ENCODE measurements at regions of chr3 and their contacts with region 1.

Region 1: GRCh38 chr3:108818404-108818803 is 4.2 kb upstream of the TRAT1 start:
- DNase-seq: peak in 8 of 9 donors; percentile 43 to 82 (median 71)
- ATAC-seq: peak; percentile 95
- H3K4me3 ChIP-seq: no peak overlapping the region
- H3K4me3 Mint-ChIP-seq: peak overlapping the region in 8 of 10 donors; percentile 17 to 75 (median 55)
- H3K27ac ChIP-seq: no peak overlapping the region
- H3K27ac Mint-ChIP-seq: peak overlapping the region; percentile 2 to 100 (median 80)
- H3K4me1 ChIP-seq: peaks cover 26 to 29% of the 10 kb centered on the region in 2 donors
- H3K4me1 Mint-ChIP-seq: peaks cover 14 to 44% (median 31%) of the 10 kb centered on the region in 7 donors
- H3K27me3 ChIP-seq: no peaks in the 10 kb centered on the region
- H3K27me3 Mint-ChIP-seq: no peaks in the 10 kb centered on the region

Region 2: GRCh38 chr3:108221911-108222852 is 596.2 kb before region 1 on chr3 and contains the start of gene IFT57:
- CTCF ChIA-PET with region 1: no interaction called
- POLR2A ChIA-PET with region 1: no interaction called
- intact Hi-C with region 1: loop called (anchors 5 kb)
- DNase-seq: peak; percentile 89 to 97 (median 96)
- ATAC-seq: peak; percentile 97
- H3K4me3 ChIP-seq: peak within 1 kb of the TSS; percentile 59
- H3K4me3 Mint-ChIP-seq: peak within 1 kb of the TSS; percentile 93 to 99 (median 97)
- H3K27ac ChIP-seq: peak within 1 kb of the TSS; percentile 95
- H3K27ac Mint-ChIP-seq: peak within 1 kb of the TSS; percentile 95 to 100 (median 99)
- H3K4me1 ChIP-seq: peaks cover 21 to 24% of the 10 kb centered on the region in 2 donors
- H3K4me1 Mint-ChIP-seq: peaks cover 27 to 83% (median 62%) of the 10 kb centered on the region in 7 donors
- H3K27me3 ChIP-seq: no peaks in the 10 kb centered on the region
- H3K27me3 Mint-ChIP-seq: no peaks in the 10 kb centered on the region
- total RNA-seq, gene IFT57: 18.0 to 45.4 (median 26.4) TPM

Region 3: DNA sequence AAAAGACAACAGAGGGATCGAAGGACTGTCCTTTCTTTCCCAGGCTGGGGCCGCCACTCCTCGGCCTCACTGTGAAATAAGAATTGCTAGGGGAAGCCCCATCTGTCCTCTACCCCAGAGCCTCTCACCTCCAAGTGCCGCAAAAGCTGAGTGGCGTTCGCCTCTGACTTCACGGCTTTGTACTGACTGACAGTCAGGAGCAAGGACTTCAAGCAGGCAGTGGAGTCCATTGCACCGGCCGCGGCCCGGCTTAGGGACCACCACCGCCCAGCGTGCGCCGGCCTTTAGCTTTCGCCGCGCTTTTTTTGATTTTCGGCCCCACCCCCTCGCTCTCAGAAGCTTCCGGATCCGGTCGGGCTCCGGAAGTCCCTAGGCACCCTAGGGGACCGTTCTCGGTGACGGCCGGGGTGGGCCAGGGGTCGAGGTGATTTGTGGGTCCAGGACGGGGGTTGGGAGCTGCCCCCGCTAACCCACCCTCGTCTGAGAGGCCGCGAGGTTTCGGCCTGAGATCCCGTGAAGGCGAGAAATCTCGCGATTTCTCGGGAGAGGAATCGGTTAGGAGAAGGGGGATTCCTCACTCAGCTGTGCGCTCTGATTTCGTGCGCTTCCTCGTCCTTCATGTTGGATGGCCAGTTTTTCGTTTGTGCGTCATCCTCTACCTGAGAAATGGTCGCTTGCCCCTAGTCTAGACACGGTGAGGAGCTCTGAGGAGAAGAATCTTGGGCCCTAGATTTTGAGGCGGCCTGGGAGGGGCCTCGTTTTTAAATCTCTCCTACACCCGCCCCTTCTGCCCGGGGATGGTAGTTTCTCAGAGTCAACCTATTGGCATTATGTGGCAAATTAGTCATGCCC is 229.0 kb before region 1 on chr3 and contains the starts of genes CIP2A and DZIP3:
- CTCF ChIA-PET with region 1: interaction called, 6 read pairs
- POLR2A ChIA-PET with region 1: interaction called, 22 read pairs
- intact Hi-C with region 1: loop called (anchors 1 kb)
- DNase-seq: peak; percentile 74 to 88 (median 82)
- ATAC-seq: peak; percentile 83
- H3K4me3 ChIP-seq: peak within 1 kb of the TSS; percentile 87
- H3K4me3 Mint-ChIP-seq: peak within 1 kb of the TSS; percentile 94 to 99 (median 98)
- H3K27ac ChIP-seq: peak within 1 kb of the TSS; percentile 92
- H3K27ac Mint-ChIP-seq: peak within 1 kb of the TSS; percentile 95 to 100 (median 99)
- H3K4me1 ChIP-seq: peaks cover 11 to 15% of the 10 kb centered on the region in 2 donors
- H3K4me1 Mint-ChIP-seq: peaks cover 12 to 53% (median 39%) of the 10 kb centered on the region in 7 donors
- H3K27me3 ChIP-seq: no peaks in the 10 kb centered on the region
- H3K27me3 Mint-ChIP-seq: no peaks in the 10 kb centered on the region
- total RNA-seq, gene CIP2A: 3.4 to 44.2 (median 4.1) TPM
- total RNA-seq, gene DZIP3: 9.6 to 17.3 (median 14.6) TPM

Region 4: DNA sequence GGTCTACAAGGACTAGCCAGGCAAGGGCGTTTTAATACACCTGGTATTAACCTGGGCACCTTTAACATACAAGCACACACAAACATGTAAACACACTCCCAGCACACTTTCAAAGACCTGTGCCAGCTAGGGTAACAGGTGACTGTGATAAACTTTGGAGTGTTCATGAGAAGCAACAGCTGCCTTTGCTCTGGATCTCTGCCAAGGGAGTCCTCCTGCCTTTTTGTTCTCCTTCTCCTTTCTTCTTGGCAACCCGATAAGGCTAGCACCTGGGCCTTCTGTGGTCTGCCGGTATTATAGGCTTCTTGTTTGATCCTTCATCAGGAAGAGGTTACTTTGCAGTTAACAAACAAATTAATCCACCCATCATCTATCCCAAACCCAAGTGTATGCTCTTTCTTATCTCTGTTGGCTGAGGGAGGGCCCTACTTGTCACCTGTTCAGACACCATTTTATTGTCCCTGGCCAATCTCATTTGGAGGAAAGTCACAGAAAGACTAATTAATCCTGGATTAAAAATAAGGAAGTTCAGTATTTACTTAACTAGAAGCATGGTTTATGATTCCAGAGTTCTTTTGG is 60.9 kb before region 1 on chr3 and contains the start of gene RETNLB:
- CTCF ChIA-PET with region 1: no interaction called
- POLR2A ChIA-PET with region 1: interaction called, 3 read pairs
- intact Hi-C with region 1: loop called in 1 of 2 experiments (anchors 5 kb)
- DNase-seq: no peak
- ATAC-seq: no peak
- H3K4me3 ChIP-seq: no peak within 1 kb of the TSS
- H3K4me3 Mint-ChIP-seq: peak within 1 kb of the TSS in 1 of 10 donors; percentile 4
- H3K27ac ChIP-seq: no peak within 1 kb of the TSS
- H3K27ac Mint-ChIP-seq: peak within 1 kb of the TSS in 2 of 9 donors; percentile 14 to 59
- H3K4me1 ChIP-seq: no peaks in the 10 kb centered on the region
- H3K4me1 Mint-ChIP-seq: peaks cover 0 to 21% (median 11%) of the 10 kb centered on the region in 7 donors
- H3K27me3 ChIP-seq: no peaks in the 10 kb centered on the region
- H3K27me3 Mint-ChIP-seq: no peaks in the 10 kb centered on the region
- total RNA-seq, gene RETNLB: not detected

Region 5: DNA sequence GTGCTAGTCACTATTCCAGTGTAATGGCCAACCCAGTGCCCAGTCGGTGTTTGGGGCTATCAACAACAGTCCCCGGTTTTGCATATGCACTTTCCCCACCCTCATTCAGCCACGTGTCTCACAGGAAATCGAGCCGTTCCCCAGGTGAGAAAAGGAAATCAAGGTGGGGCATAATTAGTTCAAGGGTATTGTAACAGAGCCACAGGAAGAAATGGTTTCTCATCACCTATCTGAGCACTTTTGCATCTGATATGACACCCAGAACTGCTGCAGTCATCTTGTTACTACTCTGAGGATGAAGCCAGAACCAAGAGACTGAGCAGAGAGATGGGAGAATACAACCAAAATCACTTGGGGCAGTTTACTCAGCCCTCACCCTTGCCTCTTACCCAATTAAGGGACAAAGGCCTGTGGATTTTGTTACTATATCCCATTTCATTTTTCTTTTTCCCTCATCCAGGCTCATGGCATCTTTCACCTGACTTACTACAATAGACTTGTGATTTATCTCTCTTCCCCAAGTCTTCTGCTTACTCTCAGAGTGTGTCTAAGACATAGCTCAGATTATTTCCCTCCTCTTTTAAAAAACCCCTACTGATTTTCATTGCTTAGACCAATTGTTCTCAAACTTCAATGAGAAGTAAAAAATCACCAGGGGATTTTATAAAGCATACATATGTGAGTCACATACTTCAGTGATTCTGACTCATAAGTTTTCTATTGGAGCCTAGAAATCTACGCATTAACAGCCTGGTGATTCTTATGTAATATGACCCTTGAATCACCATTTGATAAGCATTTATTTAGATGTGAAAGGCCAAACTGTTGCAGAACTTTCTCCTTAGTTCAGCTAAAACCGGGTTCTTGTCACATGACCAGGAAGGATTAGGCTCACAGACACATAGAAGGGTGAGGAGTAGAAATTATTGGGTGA is 44.7 kb after region 1 on chr3:
- CTCF ChIA-PET with region 1: no interaction called
- POLR2A ChIA-PET with region 1: interaction called, 7 read pairs
- intact Hi-C with region 1: loop called in 1 of 2 experiments (anchors 2 kb)
- DNase-seq: peak in 4 of 9 donors; percentile 22 to 38 (median 28)
- ATAC-seq: peak; percentile 63
- H3K4me3 ChIP-seq: no peak overlapping the region
- H3K4me3 Mint-ChIP-seq: peak overlapping the region; percentile 25 to 77 (median 64)
- H3K27ac ChIP-seq: peak overlapping the region; percentile 52
- H3K27ac Mint-ChIP-seq: peak overlapping the region; percentile 64 to 93 (median 83)
- H3K4me1 ChIP-seq: peaks cover 8 to 23% of the 10 kb centered on the region in 2 donors
- H3K4me1 Mint-ChIP-seq: peaks cover 29 to 57% (median 53%) of the 10 kb centered on the region in 7 donors
- H3K27me3 ChIP-seq: no peaks in the 10 kb centered on the region
- H3K27me3 Mint-ChIP-seq: no peaks in the 10 kb centered on the region

Region 6: GRCh38 chr3:109806929-109807328 is 988.5 kb after region 1 on chr3:
- CTCF ChIA-PET with region 1: no interaction called
- POLR2A ChIA-PET with region 1: no interaction called
- intact Hi-C with region 1: loop called in 1 of 2 experiments (anchors 10 kb)
- DNase-seq: peak in 8 of 9 donors; percentile 28 to 76 (median 66)
- ATAC-seq: peak; percentile 94
- H3K4me3 ChIP-seq: peak overlapping the region; percentile 4
- H3K4me3 Mint-ChIP-seq: peak overlapping the region; percentile 14 to 88 (median 76)
- H3K27ac ChIP-seq: peak overlapping the region; percentile 52
- H3K27ac Mint-ChIP-seq: peak overlapping the region; percentile 85 to 97 (median 89)
- H3K4me1 ChIP-seq: peaks cover 29 to 44% of the 10 kb centered on the region in 2 donors
- H3K4me1 Mint-ChIP-seq: peaks cover 18 to 62% (median 46%) of the 10 kb centered on the region in 7 donors
- H3K27me3 ChIP-seq: no peaks in the 10 kb centered on the region
- H3K27me3 Mint-ChIP-seq: peaks cover 0 to 7% (median 0%) of the 10 kb centered on the region in 5 donors

Measured in naive thymus-derived CD4-positive, alpha-beta T cell (primary cell).